HepG2 (cell line): ENCODE measurements at regions of chr1 and their contacts with region 1.

Region 1: GRCh38 chr1:1004780-1005697 is 5.1 kb upstream of the HES4 start:
- DNase-seq: no peak
- ATAC-seq: peak; percentile 45
- H3K4me3 ChIP-seq: peak overlapping the region; percentile 56 to 77 (median 70)
- H3K27ac ChIP-seq: peak overlapping the region; percentile 88
- H3K4me1 ChIP-seq: peaks cover 54% of the 10 kb centered on the region
- H3K27me3 ChIP-seq: no peaks in the 10 kb centered on the region
- CTCF ChIP-seq: no peak; the same call in 1 of the 2 replicates
- EP300 ChIP-seq: 0 out of 4 replicates have a peak, but pooled peaks of 1 of the 2 experiments have one; percentile 6
- POLR2A ChIP-seq: 0 out of 4 replicates have a peak, but pooled peaks of 1 of the 2 experiments have one; percentile 31
- RAD21 ChIP-seq: 0 out of 2 replicates have a peak, but pooled peaks have one; percentile 38

Region 2: GRCh38 chr1:1019122-1019999 is 14.3 kb after region 1 on chr1:
- CTCF ChIA-PET with region 1: no interaction called
- POLR2A ChIA-PET with region 1: interaction called, 61 read pairs
- in situ Hi-C with region 1: no loop called
- intact Hi-C with region 1: no loop called
- DNase-seq: peak; percentile 88
- ATAC-seq: peak; percentile 74
- H3K4me3 ChIP-seq: peak overlapping the region in 2 of 3 experiments; percentile 28 to 55; a peak in 3 of 6 replicates
- H3K27ac ChIP-seq: peak overlapping the region; percentile 50
- H3K4me1 ChIP-seq: peaks cover 82% of the 10 kb centered on the region
- H3K27me3 ChIP-seq: no peaks in the 10 kb centered on the region
- CTCF ChIP-seq: peak; percentile 67
- EP300 ChIP-seq: peak in 1 of 2 experiments; percentile 51; a peak in 1 of 4 replicates
- POLR2A ChIP-seq: no peak
- RAD21 ChIP-seq: no peak; the same call in 1 of the 2 replicates